Activated naive CD4-positive, alpha-beta T cell treated with anti-CD3 and anti-CD28 coated beads for 36 hours (primary cell): ENCODE measurements at regions of chr10 and their contacts with region 1.

Region 1: DNA sequence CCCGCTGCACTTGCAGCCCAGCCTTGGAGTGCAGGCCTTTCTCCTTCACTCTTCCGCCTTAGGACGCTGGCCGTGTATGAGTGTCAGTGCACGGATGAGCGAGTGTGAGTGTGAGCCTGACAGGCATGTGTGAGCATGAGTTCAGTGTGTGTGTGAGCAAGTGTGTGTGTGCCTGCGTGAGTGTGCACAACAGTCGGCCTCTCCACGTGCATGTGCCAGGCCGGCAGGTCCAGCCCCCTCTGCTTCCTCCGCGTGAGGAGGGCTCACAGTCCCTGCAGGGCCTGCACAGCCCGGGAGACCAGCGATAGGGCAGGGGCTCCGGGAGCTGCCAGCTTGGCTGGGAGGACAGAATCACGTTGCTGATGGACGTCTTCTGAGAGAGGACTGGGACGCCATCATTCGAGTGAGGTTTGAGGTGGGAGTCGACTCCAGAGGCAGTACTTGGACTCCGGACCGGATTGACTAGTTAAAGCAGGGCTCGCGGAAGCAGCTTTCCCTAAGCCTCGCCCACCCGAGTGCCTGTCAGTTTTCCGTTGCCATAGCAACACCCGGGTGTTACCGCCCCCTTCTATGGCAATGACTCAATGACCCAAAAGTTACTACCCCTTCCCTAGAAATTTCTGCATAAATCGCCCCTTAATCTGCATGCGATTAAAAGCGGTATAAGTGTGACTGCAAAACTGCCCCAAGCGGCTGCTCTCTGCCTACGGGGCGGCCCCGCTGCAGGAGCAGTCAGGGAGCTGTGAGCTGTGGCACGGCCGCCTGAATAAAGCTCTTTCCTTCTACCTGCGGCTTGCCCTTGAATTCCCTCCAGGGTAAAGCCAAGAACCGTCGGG is 19.6 kb upstream of the CFAP46 start:
- DNase-seq: peak; percentile 93
- H3K4me3 Mint-ChIP-seq: peak overlapping the region; percentile 67
- H3K27ac Mint-ChIP-seq: peak overlapping the region; percentile 84
- H3K4me1 Mint-ChIP-seq: peaks cover 23% of the 10 kb centered on the region
- H3K27me3 Mint-ChIP-seq: peaks cover 14% of the 10 kb centered on the region

Region 2: GRCh38 chr10:132396495-132397035 is 565.4 kb before region 1 on chr10:
- CTCF ChIA-PET with region 1: no interaction called
- intact Hi-C with region 1: loop called (anchors 5 kb)
- DNase-seq: peak; percentile 65
- H3K4me3 Mint-ChIP-seq: no peak overlapping the region
- H3K27ac Mint-ChIP-seq: no peak overlapping the region
- H3K4me1 Mint-ChIP-seq: peaks cover 13% of the 10 kb centered on the region
- H3K27me3 Mint-ChIP-seq: no peaks in the 10 kb centered on the region

Region 3: DNA sequence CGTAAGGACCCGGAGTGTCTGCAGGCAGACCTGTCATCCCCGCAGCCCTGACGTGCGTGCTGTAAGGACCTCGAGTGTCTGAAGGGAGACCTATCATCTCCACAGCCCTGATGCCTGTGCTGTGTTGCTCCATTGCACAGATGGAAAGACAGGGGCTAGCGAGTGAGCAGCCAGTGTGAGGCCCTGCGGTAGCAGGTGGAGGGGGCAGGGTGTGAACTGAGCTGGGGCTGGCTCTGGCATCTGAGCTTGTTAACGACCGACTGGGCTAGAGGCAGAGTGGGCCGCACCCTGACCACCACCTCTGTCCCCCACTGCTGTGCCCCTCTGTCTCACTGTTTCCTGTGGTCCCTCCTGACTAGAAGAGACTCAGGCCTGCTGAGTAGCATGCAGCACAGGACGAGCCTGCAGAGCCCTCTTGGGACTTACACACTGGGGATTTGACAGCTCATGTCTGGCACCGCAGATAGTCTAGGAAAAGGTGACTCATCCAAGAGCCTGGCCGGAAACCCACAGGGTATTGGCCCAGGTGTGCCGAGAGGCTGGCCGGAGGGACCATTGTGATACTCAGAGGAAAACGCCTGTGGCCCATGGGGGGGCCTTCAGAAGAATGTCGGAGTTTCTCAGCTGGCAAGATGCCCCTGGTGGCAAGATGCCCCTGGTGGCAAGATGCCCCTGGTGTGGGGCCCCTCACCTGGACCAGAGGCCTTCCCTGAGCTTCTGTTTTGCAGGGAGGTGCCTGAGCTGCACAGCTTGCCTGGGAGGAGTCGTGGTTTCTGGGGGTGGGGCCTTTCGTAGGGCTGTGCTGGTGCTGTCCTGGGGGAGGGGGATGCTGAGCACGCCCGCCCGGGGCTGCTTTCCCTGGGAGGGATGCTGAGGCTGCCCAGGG is 390.1 kb before region 1 on chr10:
- CTCF ChIA-PET with region 1: no interaction called
- intact Hi-C with region 1: loop called (anchors 10 kb)
- DNase-seq: peak; percentile 90
- H3K4me3 Mint-ChIP-seq: no peak overlapping the region
- H3K27ac Mint-ChIP-seq: no peak overlapping the region
- H3K4me1 Mint-ChIP-seq: peaks cover 5% of the 10 kb centered on the region
- H3K27me3 Mint-ChIP-seq: no peaks in the 10 kb centered on the region

Region 4: GRCh38 chr10:132929953-132930548 is 32.0 kb before region 1 on chr10:
- CTCF ChIA-PET with region 1: no interaction called
- intact Hi-C with region 1: loop called (anchors 1 kb)
- DNase-seq: peak; percentile 56
- H3K4me3 Mint-ChIP-seq: no peak overlapping the region
- H3K27ac Mint-ChIP-seq: peak overlapping the region; percentile 71
- H3K4me1 Mint-ChIP-seq: peaks cover 25% of the 10 kb centered on the region
- H3K27me3 Mint-ChIP-seq: no peaks in the 10 kb centered on the region

Region 5: DNA sequence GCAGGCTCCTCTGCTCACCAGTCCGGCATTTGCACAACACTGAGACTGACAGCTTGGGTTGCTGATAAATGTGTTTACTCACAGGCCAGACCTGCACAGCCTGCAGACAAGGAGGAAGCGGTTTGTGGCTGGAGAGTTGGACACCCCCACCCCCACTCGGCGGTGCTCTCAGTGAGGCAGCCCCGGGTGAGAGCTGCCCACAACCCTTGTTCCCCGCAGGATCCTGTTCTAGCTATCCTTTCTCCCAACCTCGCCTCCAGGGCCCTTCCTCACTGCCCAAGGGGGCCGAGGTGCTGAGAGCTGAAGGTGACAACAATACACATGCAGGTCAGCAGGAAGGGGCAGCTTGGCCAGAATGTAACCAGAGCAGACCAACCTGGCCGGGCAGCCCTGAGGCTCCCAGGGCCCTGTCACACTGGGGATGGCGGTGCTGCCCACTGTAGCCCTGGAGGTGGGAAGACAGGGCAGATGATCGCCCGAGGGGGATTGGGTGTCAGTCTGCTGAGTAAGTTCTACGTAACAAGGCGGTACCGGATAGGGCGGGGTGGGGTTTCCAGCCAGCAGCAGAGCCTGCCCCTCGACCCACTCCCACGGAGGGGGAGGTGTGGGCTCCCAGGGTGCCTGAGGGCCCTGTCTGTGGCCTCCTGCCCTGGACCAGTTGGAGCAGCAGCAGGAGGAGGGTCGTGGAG is 316.7 kb after region 1 on chr10:
- CTCF ChIA-PET with region 1: no interaction called
- intact Hi-C with region 1: loop called (anchors 5 kb)
- DNase-seq: no peak
- H3K4me3 Mint-ChIP-seq: no peak overlapping the region
- H3K27ac Mint-ChIP-seq: peak overlapping the region; percentile 19
- H3K4me1 Mint-ChIP-seq: peaks cover 23% of the 10 kb centered on the region
- H3K27me3 Mint-ChIP-seq: no peaks in the 10 kb centered on the region

Region 6: DNA sequence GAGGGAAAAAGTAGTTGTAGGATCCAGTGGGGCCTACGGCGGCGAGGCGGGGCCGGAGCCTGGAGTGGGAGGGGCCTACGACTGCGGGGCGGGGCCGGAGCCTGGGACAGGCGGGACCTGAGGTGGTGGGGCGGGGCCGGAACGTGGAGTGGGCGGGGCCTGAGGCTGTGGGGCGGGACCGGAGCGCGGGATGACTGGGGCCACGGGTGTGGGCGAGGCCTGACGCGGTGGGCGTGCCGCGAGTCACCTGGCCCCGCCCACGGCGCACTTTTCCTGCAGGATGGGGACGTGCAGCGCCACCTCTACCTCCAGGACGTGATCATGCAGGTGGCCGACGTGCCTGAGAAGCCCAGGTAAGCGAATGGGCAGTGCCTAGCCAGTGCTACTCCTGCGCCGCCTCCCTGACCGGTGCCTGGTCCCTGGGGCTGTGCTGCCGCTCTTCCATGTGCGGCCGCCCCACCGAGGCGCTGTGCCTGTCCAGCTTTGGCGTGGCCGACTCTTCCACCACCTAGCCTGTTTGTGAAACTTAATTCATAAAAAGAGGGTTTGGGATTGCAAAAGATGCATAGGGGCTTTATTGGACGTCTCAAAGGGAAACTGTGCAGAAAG is 347.2 kb after region 1 on chr10:
- CTCF ChIA-PET with region 1: no interaction called
- intact Hi-C with region 1: loop called (anchors 2 kb)
- DNase-seq: peak; percentile 95
- H3K4me3 Mint-ChIP-seq: peak overlapping the region; percentile 65
- H3K27ac Mint-ChIP-seq: peak overlapping the region; percentile 71
- H3K4me1 Mint-ChIP-seq: peaks cover 23% of the 10 kb centered on the region
- H3K27me3 Mint-ChIP-seq: no peaks in the 10 kb centered on the region